Adrenal gland (tissue), 19 donors: ENCODE measurements at regions of chr12 and their contacts with region 1.

Region 1: GRCh38 chr12:50174971-50175715 is 8.0 kb upstream of the CERS5 start:
- DNase-seq: peak in 3 of 7 donors; percentile 42 to 54 (median 48)
- H3K4me3 ChIP-seq: no peak overlapping the region
- H3K27ac ChIP-seq: no peak overlapping the region
- H3K4me1 ChIP-seq: no peaks in the 10 kb centered on the region
- H3K27me3 ChIP-seq: no peaks in the 10 kb centered on the region
- CTCF ChIP-seq: peak; percentile 63 to 86 (median 78)
- POLR2A ChIP-seq: no peak

Region 2: DNA sequence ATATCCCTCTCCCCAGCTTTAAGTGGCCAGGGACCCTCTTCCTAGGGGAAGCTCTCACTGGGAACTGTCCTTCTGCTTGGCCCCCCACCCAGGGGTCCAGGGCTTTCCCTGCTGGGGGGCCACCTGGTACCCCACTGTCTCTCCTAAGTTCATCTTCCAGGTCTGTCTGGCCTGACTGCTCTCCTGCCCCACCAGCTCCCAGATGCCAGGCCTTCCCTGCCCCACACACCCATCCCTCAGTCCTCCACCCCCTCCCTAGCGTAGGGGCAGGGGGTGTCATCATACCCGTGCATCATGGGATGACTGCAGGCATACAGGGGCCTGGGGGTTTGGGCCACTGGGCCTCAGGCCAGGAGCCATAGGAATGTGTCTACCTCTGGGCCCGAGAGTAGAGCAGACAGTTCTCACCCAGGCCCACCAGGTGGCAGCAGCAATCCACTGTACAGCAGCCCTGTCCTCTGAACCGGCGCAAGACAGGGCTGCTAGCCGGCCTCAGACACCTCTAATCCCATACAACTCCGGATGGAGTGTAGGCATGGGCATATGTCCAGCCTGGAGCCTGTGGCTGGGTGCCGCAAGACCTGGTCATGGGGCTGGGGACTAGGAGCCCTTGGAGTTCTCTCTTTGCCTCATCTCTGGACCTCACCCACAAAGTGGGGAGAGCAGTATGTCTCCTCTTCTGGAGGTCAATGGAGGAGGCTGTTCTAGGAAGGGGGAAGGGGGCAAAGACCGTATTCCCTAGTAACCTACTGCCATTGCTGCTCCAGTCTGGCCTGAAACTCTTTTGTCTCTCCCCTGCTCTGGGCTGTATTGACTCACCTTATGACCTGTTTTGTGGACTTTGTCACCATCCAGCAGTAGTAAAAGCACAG is 100.0 kb before region 1 on chr12:
- intact Hi-C with region 1: loop called (anchors 5 kb)
- DNase-seq: peak; percentile 84 to 94 (median 89)
- H3K4me3 ChIP-seq: no peak overlapping the region
- H3K27ac ChIP-seq: no peak overlapping the region
- H3K4me1 ChIP-seq: peaks cover 0 to 4% of the 10 kb centered on the region in 2 donors
- H3K27me3 ChIP-seq: no peaks in the 10 kb centered on the region
- CTCF ChIP-seq: peak; percentile 82 to 98 (median 96)
- POLR2A ChIP-seq: no peak

Region 3: DNA sequence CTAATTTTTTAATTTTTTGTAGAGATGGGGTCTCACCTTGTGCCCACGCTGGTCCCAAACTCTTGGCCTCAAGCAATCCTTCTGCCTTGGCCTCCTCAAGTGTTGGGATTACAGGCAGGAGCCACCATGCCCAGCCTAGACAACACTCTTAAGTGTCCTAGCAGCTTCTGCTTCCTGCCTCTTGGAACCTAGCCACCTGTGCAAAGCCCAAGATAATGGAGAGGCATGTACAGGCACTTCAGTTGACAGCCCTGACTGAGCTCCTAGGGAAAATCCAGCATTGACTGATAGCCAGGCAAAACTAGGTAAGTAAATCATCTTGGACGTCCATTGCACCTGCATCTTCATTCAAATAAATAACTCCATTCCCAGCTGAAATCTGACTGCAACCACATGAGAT is 47.6 kb before region 1 on chr12:
- intact Hi-C with region 1: loop called (anchors 5 kb)
- DNase-seq: peak in 1 of 7 donors; percentile 14
- H3K4me3 ChIP-seq: no peak overlapping the region
- H3K27ac ChIP-seq: no peak overlapping the region
- H3K4me1 ChIP-seq: peaks cover 10 to 17% of the 10 kb centered on the region in 2 donors
- H3K27me3 ChIP-seq: no peaks in the 10 kb centered on the region
- CTCF ChIP-seq: no peak
- POLR2A ChIP-seq: no peak

Region 4: DNA sequence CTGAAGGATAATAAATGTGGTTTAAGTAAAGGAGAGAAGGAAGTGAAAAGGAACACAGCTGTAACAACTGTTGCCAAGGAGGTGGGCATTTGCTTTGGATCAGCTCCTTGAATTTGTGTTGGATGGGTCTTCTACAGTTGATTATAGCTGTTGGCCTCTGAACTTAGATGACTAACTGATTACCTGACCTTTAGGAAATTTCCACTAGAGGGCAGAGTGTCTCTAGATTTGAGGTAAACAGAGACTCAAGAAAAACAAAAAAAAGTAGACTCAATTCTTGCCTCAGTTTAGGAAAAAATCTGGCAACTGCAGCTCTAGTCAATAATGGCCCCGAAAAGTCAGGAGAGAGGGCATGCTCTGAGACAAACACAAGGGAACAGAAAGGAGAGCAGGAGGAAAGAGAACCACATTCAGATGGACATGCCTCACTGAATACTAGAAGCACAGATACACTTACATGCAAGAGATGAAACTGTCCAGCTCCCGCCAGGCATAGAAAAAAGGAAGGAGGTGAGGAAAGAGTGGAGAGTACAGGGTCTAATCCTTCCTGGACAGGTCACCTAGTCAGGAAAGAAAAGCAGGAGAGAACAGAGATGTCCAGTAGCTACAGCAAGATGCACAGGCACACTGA is 42.5 kb before region 1 on chr12:
- intact Hi-C with region 1: loop called (anchors 5 kb)
- DNase-seq: no peak
- H3K4me3 ChIP-seq: no peak overlapping the region
- H3K27ac ChIP-seq: peak overlapping the region in 3 of 5 donors; percentile 22 to 64 (median 38)
- H3K4me1 ChIP-seq: peaks cover 16 to 29% of the 10 kb centered on the region in 2 donors
- H3K27me3 ChIP-seq: no peaks in the 10 kb centered on the region
- CTCF ChIP-seq: peak in 4 of 6 experiments; percentile 45 to 71 (median 58)
- POLR2A ChIP-seq: no peak